IMR-90 (cell line): ENCODE measurements at regions of chr10 and their contacts with region 1.

Region 1: DNA sequence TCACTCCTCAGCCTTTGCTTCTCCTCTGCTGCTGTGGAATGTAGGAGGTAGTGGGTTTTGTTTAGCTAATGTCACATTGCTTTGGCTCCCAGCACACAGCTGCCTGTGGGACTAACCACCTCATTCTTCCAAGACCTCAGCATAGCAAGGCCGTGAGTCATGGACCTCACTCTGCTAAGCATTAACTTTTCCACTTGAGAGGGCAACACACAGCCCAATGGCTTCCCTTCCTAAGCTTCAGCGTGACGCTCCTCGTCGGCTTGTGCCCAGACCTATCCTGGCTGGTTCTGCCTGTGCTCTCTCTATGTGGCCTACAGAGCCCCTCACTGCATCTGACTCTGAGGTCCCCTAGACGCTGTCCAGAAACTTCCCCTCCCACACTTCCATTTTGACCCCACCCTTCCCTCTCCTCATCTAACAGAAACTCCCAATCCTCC is 23.3 kb downstream of the MYOF start:
- DNase-seq: peak; percentile 100
- ATAC-seq: peak; percentile 88
- H3K4me3 ChIP-seq: no peak overlapping the region
- H3K27ac ChIP-seq: peak overlapping the region; percentile 93
- H3K4me1 ChIP-seq: peaks cover 38% of the 10 kb centered on the region
- H3K27me3 ChIP-seq: no peaks in the 10 kb centered on the region
- CTCF ChIP-seq: no peak
- POLR2A ChIP-seq: peak; percentile 81; the same call in 1 of the 2 replicates
- RAD21 ChIP-seq: peak; percentile 25

Region 2: GRCh38 chr10:92763634-92764155 is 695.1 kb before region 1 on chr10:
- CTCF ChIA-PET with region 1: no interaction called
- POLR2A ChIA-PET with region 1: no interaction called
- dilution Hi-C with region 1: no loop called
- in situ Hi-C with region 1: no loop called
- intact Hi-C with region 1: no loop called
- DNase-seq: no peak
- ATAC-seq: no peak
- H3K4me3 ChIP-seq: no peak overlapping the region
- H3K27ac ChIP-seq: no peak overlapping the region
- H3K4me1 ChIP-seq: peaks cover 9% of the 10 kb centered on the region
- H3K27me3 ChIP-seq: no peaks in the 10 kb centered on the region
- CTCF ChIP-seq: no peak
- POLR2A ChIP-seq: no peak
- RAD21 ChIP-seq: no peak

Region 3: DNA sequence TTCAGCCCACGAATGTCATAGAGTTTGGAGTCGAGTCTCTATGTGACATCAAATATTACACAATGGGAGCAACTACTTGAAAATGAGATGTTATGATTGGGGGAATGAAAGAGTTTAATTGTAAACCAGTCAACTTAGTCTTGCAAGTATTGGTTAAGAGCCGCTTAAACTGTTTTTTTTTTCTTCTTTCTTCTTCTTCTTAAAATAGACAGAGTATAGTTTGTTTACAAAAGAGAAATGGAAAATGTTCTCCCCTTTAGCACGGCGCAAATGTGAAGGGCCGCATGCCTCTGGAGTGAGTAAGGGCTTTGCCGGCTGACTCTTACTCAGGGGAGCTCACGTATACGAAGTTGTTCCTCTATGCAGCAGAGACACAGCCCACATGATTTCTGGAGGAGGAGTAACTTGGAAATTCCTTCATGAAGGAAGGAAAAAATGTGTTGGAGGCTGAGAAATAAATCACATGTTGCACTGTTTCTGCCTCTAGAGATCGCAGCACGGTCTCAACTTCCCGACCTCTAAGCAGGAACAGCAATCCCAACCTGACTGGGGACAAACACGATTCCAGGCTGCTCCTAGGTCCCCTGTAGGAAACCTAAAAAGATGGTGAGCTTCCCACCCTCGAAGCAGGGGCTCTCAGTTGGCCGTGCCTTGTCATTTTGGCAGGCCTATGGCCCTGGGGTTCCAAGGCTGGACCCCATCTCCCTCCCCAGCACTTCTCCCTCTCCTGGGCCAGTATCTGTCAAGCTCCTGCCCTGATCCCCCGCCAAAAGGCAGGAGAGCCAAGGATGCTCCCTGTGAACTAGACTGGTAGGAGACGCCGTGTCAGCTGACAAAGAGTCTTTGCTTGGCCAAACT is 21.5 kb before region 1 on chr10:
- CTCF ChIA-PET with region 1: interaction called, 3 read pairs
- POLR2A ChIA-PET with region 1: interaction called, 9 read pairs
- dilution Hi-C with region 1: no loop called
- in situ Hi-C with region 1: no loop called
- intact Hi-C with region 1: loop called (anchors 2 kb)
- DNase-seq: peak; percentile 99
- ATAC-seq: peak; percentile 91
- H3K4me3 ChIP-seq: no peak overlapping the region
- H3K27ac ChIP-seq: peak overlapping the region; percentile 91
- H3K4me1 ChIP-seq: peaks cover 35% of the 10 kb centered on the region
- H3K27me3 ChIP-seq: no peaks in the 10 kb centered on the region
- CTCF ChIP-seq: no peak; the same call in 1 of the 2 replicates
- POLR2A ChIP-seq: peak; percentile 35
- RAD21 ChIP-seq: peak; percentile 4; the same call in 1 of the 2 replicates

Region 4: DNA sequence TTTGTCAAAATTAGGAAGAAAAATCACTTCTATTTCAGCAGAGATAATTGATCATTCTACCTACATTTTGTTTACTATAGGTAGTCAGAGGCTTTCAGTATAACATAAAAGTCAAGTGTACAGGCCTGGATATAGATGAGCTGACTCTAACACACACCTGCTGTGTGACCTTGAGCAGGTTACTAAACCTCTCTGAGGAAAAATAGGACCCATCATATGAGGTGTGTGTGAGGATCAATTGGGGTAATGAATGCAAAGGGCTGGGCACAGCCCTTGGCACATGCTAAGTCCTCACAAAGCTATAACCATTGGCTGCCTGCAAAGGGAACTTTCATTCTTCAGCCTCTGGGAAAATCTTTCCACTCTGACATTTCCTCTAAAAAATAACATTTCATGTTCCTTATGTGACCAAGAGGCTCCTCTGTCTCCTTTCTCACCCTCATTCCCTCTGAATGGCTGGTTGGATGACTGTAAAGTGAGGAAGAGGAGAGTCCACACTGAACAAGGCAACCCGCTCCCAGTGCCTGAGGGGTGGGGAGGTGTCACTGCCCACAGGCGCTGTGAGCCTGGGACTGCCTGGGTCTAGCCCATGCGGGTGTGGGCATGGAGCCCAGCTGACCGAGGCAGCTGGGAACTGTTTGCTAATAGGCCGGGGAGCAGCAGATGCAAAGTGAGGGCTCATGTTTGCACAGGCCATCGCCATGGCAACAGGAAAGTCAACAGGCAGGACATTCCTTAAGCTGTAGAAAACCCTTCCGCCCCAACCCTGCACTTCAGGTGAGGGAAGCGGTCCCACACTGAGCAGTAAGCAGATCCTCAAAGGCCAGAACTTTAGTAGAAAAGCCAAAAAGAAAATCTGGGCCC is 13.5 kb before region 1 on chr10:
- CTCF ChIA-PET with region 1: interaction called, 3 read pairs
- POLR2A ChIA-PET with region 1: interaction called, 4 read pairs
- dilution Hi-C with region 1: no loop called
- in situ Hi-C with region 1: no loop called
- intact Hi-C with region 1: loop called (anchors 2 kb)
- DNase-seq: peak; percentile 98
- ATAC-seq: peak; percentile 90
- H3K4me3 ChIP-seq: no peak overlapping the region
- H3K27ac ChIP-seq: peak overlapping the region; percentile 72
- H3K4me1 ChIP-seq: peaks cover 23% of the 10 kb centered on the region
- H3K27me3 ChIP-seq: no peaks in the 10 kb centered on the region
- CTCF ChIP-seq: no peak
- POLR2A ChIP-seq: peak; percentile 78; the same call in 1 of the 2 replicates
- RAD21 ChIP-seq: no peak

Region 5: GRCh38 chr10:93535293-93535692 is 76.5 kb after region 1 on chr10:
- CTCF ChIA-PET with region 1: no interaction called
- POLR2A ChIA-PET with region 1: interaction called, 11 read pairs
- dilution Hi-C with region 1: no loop called
- in situ Hi-C with region 1: no loop called
- intact Hi-C with region 1: no loop called
- DNase-seq: no peak
- ATAC-seq: no peak
- H3K4me3 ChIP-seq: no peak overlapping the region
- H3K27ac ChIP-seq: no peak overlapping the region
- H3K4me1 ChIP-seq: no peaks in the 10 kb centered on the region
- H3K27me3 ChIP-seq: no peaks in the 10 kb centered on the region
- CTCF ChIP-seq: no peak
- POLR2A ChIP-seq: no peak
- RAD21 ChIP-seq: no peak